IMR-90 (cell line): ENCODE measurements at regions of chr4 and their contacts with region 1.

Region 1: GRCh38 chr4:183165376-183165775 is 66.3 kb downstream of the WWC2 start:
- DNase-seq: peak; percentile 51
- ATAC-seq: peak; percentile 91
- H3K4me3 ChIP-seq: no peak overlapping the region
- H3K27ac ChIP-seq: peak overlapping the region; percentile 90; the same call in 1 of the 2 replicates
- H3K4me1 ChIP-seq: peaks cover 17% of the 10 kb centered on the region
- H3K27me3 ChIP-seq: no peaks in the 10 kb centered on the region
- CTCF ChIP-seq: no peak
- POLR2A ChIP-seq: no peak
- RAD21 ChIP-seq: no peak

Region 2: DNA sequence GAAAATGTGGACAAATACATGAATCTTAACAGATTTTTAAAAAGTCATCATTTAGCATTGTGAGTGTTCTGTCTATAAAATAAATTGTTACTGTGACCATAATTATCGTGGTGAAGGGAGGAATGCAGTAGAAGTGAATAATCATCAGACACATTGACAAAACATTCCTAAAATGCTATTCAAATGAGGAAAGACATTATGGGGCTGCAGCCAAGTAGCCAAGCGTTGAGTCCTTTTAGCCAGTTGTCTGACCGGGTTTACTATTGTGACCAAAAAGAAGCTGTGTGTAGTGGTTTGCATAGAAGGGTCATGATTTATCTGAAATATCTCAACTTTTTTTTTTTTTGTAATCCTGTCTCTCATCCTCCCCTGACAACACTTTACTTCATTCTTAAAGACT is 46.8 kb before region 1 on chr4:
- CTCF ChIA-PET with region 1: no interaction called
- POLR2A ChIA-PET with region 1: no interaction called
- dilution Hi-C with region 1: no loop called
- in situ Hi-C with region 1: no loop called
- intact Hi-C with region 1: loop called (anchors 2 kb)
- DNase-seq: peak; percentile 87
- ATAC-seq: peak; percentile 84
- H3K4me3 ChIP-seq: no peak overlapping the region
- H3K27ac ChIP-seq: no peak overlapping the region
- H3K4me1 ChIP-seq: peaks cover 9% of the 10 kb centered on the region
- H3K27me3 ChIP-seq: no peaks in the 10 kb centered on the region
- CTCF ChIP-seq: no peak
- POLR2A ChIP-seq: no peak
- RAD21 ChIP-seq: no peak

Region 3: GRCh38 chr4:183200453-183200852 is 35.1 kb after region 1 on chr4:
- CTCF ChIA-PET with region 1: no interaction called
- POLR2A ChIA-PET with region 1: no interaction called
- dilution Hi-C with region 1: no loop called
- in situ Hi-C with region 1: no loop called
- intact Hi-C with region 1: loop called (anchors 1 kb)
- DNase-seq: peak; percentile 92
- ATAC-seq: peak; percentile 64
- H3K4me3 ChIP-seq: no peak overlapping the region
- H3K27ac ChIP-seq: no peak overlapping the region
- H3K4me1 ChIP-seq: peaks cover 4% of the 10 kb centered on the region
- H3K27me3 ChIP-seq: no peaks in the 10 kb centered on the region
- CTCF ChIP-seq: no peak
- POLR2A ChIP-seq: no peak
- RAD21 ChIP-seq: peak; percentile 16

Region 4: GRCh38 chr4:183256756-183257385 is 91.5 kb after region 1 on chr4:
- CTCF ChIA-PET with region 1: interaction called, 10 read pairs
- POLR2A ChIA-PET with region 1: no interaction called
- dilution Hi-C with region 1: no loop called
- in situ Hi-C with region 1: no loop called
- intact Hi-C with region 1: no loop called
- DNase-seq: peak; percentile 54
- ATAC-seq: peak; percentile 85
- H3K4me3 ChIP-seq: no peak overlapping the region
- H3K27ac ChIP-seq: no peak overlapping the region
- H3K4me1 ChIP-seq: 0 out of 2 replicates have a peak, but pooled peaks cover 3% of the 10 kb centered on the region
- H3K27me3 ChIP-seq: no peaks in the 10 kb centered on the region
- CTCF ChIP-seq: peak; percentile 68
- POLR2A ChIP-seq: no peak
- RAD21 ChIP-seq: peak; percentile 66

Region 5: DNA sequence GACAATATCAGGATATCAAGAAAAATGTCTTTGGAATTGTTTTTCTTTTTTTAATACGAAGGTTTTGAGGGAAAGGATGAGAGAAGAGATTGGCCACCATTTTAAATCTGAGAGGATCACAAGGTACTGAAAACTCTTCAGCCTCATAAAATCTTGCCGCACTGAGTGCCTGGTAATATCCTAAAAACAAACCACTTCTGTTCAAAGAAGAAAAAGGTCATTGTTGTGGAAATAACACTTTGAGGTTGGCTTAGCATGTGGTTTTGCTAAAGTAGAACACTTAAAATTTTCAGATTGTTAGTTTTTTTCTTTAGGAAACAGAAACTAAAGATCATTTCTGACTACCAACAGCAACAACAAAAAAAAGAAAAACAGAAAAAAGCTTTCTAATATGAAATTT is 155.7 kb after region 1 on chr4:
- CTCF ChIA-PET with region 1: no interaction called
- POLR2A ChIA-PET with region 1: no interaction called
- dilution Hi-C with region 1: no loop called
- in situ Hi-C with region 1: no loop called
- intact Hi-C with region 1: no loop called
- DNase-seq: no peak
- ATAC-seq: no peak
- H3K4me3 ChIP-seq: no peak overlapping the region
- H3K27ac ChIP-seq: no peak overlapping the region
- H3K4me1 ChIP-seq: peaks cover 2% of the 10 kb centered on the region; the same call in 1 of the 2 replicates
- H3K27me3 ChIP-seq: no peaks in the 10 kb centered on the region
- CTCF ChIP-seq: no peak
- POLR2A ChIP-seq: no peak
- RAD21 ChIP-seq: no peak

Region 6: GRCh38 chr4:183478123-183478522 is 312.7 kb after region 1 on chr4:
- CTCF ChIA-PET with region 1: no interaction called
- POLR2A ChIA-PET with region 1: interaction called, 12 read pairs
- dilution Hi-C with region 1: no loop called
- in situ Hi-C with region 1: no loop called
- intact Hi-C with region 1: no loop called
- DNase-seq: no peak
- ATAC-seq: no peak
- H3K4me3 ChIP-seq: no peak overlapping the region
- H3K27ac ChIP-seq: no peak overlapping the region
- H3K4me1 ChIP-seq: no peaks in the 10 kb centered on the region
- H3K27me3 ChIP-seq: no peaks in the 10 kb centered on the region
- CTCF ChIP-seq: no peak
- POLR2A ChIP-seq: no peak
- RAD21 ChIP-seq: no peak